ENCODE measurements at regions of chr10 and their contacts with region 1.

Region 1: GRCh38 chr10:112721080-112721698 is 228.9 kb upstream of the TCF7L2 start:
- DNase-seq: no peak
- H3K4me3 ChIP-seq: no peak overlapping the region
- H3K27ac ChIP-seq: no peak overlapping the region
- H3K4me1 ChIP-seq: peaks cover 10% of the 10 kb centered on the region
- H3K27me3 ChIP-seq: no peaks in the 10 kb centered on the region
- CTCF ChIP-seq: peak; percentile 54 to 62

Region 2: GRCh38 chr10:112517381-112517976 is 203.7 kb before region 1 on chr10:
- CTCF ChIA-PET with region 1: no interaction called
- dilution Hi-C with region 1: no loop called
- in situ Hi-C with region 1: no loop called
- intact Hi-C with region 1: no loop called
- DNase-seq: peak; percentile 13
- H3K4me3 ChIP-seq: no peak overlapping the region
- H3K27ac ChIP-seq: no peak overlapping the region
- H3K4me1 ChIP-seq: no peaks in the 10 kb centered on the region
- H3K27me3 ChIP-seq: no peaks in the 10 kb centered on the region
- CTCF ChIP-seq: no peak

Region 3: DNA sequence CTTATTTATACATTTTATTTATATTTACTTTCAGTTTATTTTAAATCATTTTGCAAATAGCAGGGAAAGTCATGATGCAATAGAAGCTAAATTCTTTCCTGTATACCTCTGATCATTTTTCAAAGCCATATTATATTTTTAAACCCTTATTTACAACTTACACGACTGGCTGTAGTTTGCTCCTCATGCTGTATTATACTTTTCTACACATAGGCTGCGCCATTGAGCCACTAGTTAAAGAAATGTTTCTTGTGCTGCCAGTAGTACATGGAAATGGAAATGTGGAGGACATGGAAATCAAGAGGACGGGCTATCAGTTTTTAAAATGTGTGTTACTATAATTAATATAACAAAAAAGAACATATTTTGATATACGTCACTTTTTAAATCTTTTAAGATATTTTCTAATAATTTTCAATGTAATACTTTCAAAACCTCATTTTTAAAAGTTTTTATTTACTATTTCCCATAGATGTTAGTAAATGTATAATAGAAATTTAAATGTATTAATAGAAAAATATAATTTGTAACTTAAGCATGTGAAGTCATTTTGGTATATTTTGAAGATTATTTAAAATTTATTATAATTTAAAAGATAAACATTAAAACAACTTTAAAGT is 155.6 kb before region 1 on chr10:
- CTCF ChIA-PET with region 1: no interaction called
- dilution Hi-C with region 1: no loop called
- in situ Hi-C with region 1: no loop called
- intact Hi-C with region 1: no loop called
- DNase-seq: peak; percentile 53
- H3K4me3 ChIP-seq: no peak overlapping the region
- H3K27ac ChIP-seq: no peak overlapping the region
- H3K4me1 ChIP-seq: no peaks in the 10 kb centered on the region
- H3K27me3 ChIP-seq: no peaks in the 10 kb centered on the region
- CTCF ChIP-seq: peak; percentile 77 to 82

Region 4: DNA sequence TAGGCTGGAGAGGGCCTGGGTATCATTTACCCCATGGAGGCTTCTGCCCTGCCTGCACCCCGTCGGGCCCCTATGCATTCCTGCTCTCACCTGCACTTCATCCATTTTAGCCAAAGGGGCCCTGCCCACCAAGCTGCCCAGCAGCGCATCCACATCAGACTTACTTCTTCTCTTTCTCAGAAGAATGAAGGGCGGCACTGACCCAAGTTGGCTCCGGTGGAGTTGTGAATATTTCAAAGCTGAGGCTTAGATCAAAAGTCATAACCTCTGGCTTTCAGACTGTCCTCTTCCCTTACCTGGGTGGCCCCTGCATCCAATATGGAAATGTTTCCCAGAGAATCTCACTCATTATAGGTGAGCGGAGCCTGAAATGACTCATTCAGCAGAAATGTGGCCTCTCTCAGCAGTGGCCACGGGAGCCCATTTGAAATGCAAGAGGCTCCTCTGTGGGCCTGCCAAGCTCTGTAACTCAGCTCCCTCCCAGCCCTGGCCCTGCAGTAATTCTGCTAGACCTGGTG is 111.2 kb after region 1 on chr10:
- CTCF ChIA-PET with region 1: no interaction called
- dilution Hi-C with region 1: no loop called
- in situ Hi-C with region 1: no loop called
- intact Hi-C with region 1: loop called (anchors 5 kb)
- DNase-seq: peak; percentile 42
- H3K4me3 ChIP-seq: no peak overlapping the region
- H3K27ac ChIP-seq: no peak overlapping the region
- H3K4me1 ChIP-seq: peaks cover 7% of the 10 kb centered on the region
- H3K27me3 ChIP-seq: no peaks in the 10 kb centered on the region
- CTCF ChIP-seq: no peak

Region 5: DNA sequence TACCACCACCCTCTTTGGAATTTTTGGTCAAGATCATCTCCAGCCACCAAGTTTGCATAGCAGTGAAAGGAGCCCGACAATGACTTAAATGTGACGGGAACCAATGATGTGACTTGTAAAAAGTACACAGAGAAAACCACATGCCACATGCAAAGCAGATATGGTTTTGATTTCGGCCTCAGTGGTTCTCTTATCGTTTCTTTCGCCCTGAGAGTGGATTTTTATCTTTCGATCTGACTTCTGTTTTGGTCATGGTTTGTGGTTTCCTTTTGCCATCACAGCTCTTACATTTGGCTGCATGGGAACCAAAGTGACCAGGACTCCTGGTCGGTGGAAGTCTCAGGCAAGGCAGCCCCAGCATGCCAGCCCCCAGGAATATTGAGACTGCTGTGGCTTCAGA is 260.4 kb after region 1 on chr10:
- CTCF ChIA-PET with region 1: no interaction called
- dilution Hi-C with region 1: no loop called
- in situ Hi-C with region 1: no loop called
- intact Hi-C with region 1: loop called (anchors 10 kb)
- DNase-seq: no peak
- H3K4me3 ChIP-seq: no peak overlapping the region
- H3K27ac ChIP-seq: no peak overlapping the region
- H3K4me1 ChIP-seq: peaks cover 13% of the 10 kb centered on the region
- H3K27me3 ChIP-seq: no peaks in the 10 kb centered on the region
- CTCF ChIP-seq: no peak

Region 6: GRCh38 chr10:113099431-113100293 is 378.5 kb after region 1 on chr10:
- CTCF ChIA-PET with region 1: interaction called, 28 read pairs
- dilution Hi-C with region 1: no loop called
- in situ Hi-C with region 1: no loop called
- intact Hi-C with region 1: no loop called
- DNase-seq: peak; percentile 77
- H3K4me3 ChIP-seq: peak overlapping the region in 2 of 3 experiments; percentile 30 to 36
- H3K27ac ChIP-seq: peak overlapping the region; percentile 69
- H3K4me1 ChIP-seq: peaks cover 22% of the 10 kb centered on the region
- H3K27me3 ChIP-seq: no peaks in the 10 kb centered on the region
- CTCF ChIP-seq: no peak